CD4-positive, alpha-beta T cell (primary cell): ENCODE measurements at regions of chr22 and their contacts with region 1.

Region 1: DNA sequence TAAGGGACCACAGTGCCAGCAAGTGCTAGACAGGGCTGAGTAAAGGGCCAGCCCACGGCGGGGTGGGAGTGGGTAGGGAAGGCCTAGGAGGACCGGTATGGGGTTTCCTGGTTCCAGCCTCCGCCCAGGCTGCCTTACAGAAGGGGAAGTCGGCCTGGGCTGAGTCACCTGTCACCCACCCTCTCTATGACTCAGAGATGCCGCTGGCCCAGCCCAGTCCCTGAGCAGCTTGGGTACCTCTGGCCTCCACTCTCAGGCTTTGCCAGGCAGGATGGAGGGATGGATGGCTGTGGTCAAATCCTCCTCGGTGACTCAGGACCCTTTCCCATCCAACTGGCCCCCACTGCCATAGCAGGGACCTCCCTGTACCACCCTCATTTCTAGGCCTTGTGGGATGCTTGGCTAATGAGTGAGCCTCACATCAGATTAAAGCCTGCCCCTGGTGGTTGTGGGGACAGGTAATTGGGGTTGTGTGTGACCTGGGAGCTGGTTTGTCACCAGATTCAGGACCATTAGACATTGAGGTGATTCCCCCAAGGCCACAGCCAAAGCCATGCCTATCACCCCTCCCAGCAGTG is 13.9 kb downstream of the SLC35E4 start:
- DNase-seq: peak in 13 of 14 experiments; percentile 32 to 79 (median 60)
- ATAC-seq: peak; percentile 88
- H3K4me3 ChIP-seq: no peak overlapping the region
- H3K4me3 Mint-ChIP-seq: no peak overlapping the region
- H3K27ac ChIP-seq: no peak overlapping the region
- H3K27ac Mint-ChIP-seq: no peak overlapping the region
- H3K4me1 ChIP-seq: peaks cover 10% of the 10 kb centered on the region
- H3K4me1 Mint-ChIP-seq: peaks cover 7% of the 10 kb centered on the region
- H3K27me3 ChIP-seq: no peaks in the 10 kb centered on the region
- H3K27me3 Mint-ChIP-seq: no peaks in the 10 kb centered on the region
- CTCF ChIP-seq: no peak

Region 2: GRCh38 chr22:30662040-30662439 is 12.5 kb after region 1 on chr22:
- CTCF ChIA-PET with region 1: interaction called, 14 read pairs
- POLR2A ChIA-PET with region 1: no interaction called
- intact Hi-C with region 1: no loop called
- DNase-seq: no peak
- ATAC-seq: no peak
- H3K4me3 ChIP-seq: no peak overlapping the region
- H3K4me3 Mint-ChIP-seq: no peak overlapping the region
- H3K27ac ChIP-seq: no peak overlapping the region
- H3K27ac Mint-ChIP-seq: no peak overlapping the region
- H3K4me1 ChIP-seq: peaks cover 14% of the 10 kb centered on the region
- H3K4me1 Mint-ChIP-seq: peaks cover 13% of the 10 kb centered on the region
- H3K27me3 ChIP-seq: no peaks in the 10 kb centered on the region
- H3K27me3 Mint-ChIP-seq: no peaks in the 10 kb centered on the region
- CTCF ChIP-seq: no peak

Region 3: GRCh38 chr22:31075961-31076360 is 426.4 kb after region 1 on chr22:
- CTCF ChIA-PET with region 1: no interaction called
- POLR2A ChIA-PET with region 1: no interaction called
- intact Hi-C with region 1: no loop called
- DNase-seq: no peak
- ATAC-seq: no peak
- H3K4me3 ChIP-seq: no peak overlapping the region
- H3K4me3 Mint-ChIP-seq: no peak overlapping the region
- H3K27ac ChIP-seq: no peak overlapping the region
- H3K27ac Mint-ChIP-seq: no peak overlapping the region
- H3K4me1 ChIP-seq: peaks cover 7% of the 10 kb centered on the region
- H3K4me1 Mint-ChIP-seq: no peaks in the 10 kb centered on the region
- H3K27me3 ChIP-seq: no peaks in the 10 kb centered on the region
- H3K27me3 Mint-ChIP-seq: peaks cover 5% of the 10 kb centered on the region
- CTCF ChIP-seq: no peak